ENCODE measurements at regions of chr12 and their contacts with region 1.

Region 1: DNA sequence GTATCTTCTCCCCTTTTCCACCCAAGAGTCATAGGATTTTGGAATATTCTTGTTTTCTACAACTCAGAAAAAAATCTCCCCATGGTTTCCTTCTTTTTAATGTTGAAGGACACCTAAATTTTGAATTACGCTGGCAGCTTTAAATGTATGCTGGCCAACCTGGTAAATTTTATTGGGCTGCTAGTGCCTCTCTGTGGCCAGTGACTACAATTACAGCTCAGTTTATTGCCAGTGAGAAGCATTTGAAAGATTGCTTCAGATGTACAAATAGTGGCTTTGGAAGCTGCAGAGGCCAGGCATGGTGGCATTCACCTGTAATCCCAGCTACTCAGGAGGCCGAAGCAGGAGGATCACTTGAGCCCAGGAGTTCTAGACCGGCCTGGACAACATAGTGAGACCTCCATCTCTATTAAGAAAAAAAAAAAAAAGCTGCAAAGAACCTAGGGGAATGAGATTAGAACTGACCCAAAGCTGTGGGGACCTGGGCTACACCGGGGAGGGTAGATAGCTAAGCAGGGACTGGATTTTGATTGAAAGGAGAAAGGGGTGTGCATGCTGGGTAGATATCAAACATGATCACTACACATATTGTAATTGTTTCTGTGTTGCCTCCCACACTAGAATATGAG is 7.6 kb upstream of the RAB21 start:
- DNase-seq: peak; percentile 45
- ATAC-seq: peak; percentile 95
- H3K4me3 ChIP-seq: no peak overlapping the region
- H3K27ac ChIP-seq: no peak overlapping the region
- H3K4me1 ChIP-seq: no peaks in the 10 kb centered on the region
- H3K27me3 ChIP-seq: no peaks in the 10 kb centered on the region; a peak in 1 of 4 replicates
- CTCF ChIP-seq: peak; percentile 67 to 85 (median 80)
- EP300 ChIP-seq: no peak
- POLR2A ChIP-seq: no peak
- RAD21 ChIP-seq: peak; percentile 97

Region 2: GRCh38 chr12:70733385-70733784 is 1013.7 kb before region 1 on chr12:
- CTCF ChIA-PET with region 1: interaction called, 7 read pairs
- POLR2A ChIA-PET with region 1: no interaction called
- RAD21 ChIA-PET with region 1: interaction called, 4 read pairs
- SMC1A ChIA-PET with region 1: interaction called, 5 read pairs
- in situ Hi-C with region 1: loop called (anchors 25 kb)
- intact Hi-C with region 1: loop called (anchors 10 kb)
- DNase-seq: peak; percentile 5
- ATAC-seq: peak; percentile 91
- H3K4me3 ChIP-seq: no peak overlapping the region
- H3K27ac ChIP-seq: no peak overlapping the region
- H3K4me1 ChIP-seq: no peaks in the 10 kb centered on the region
- H3K27me3 ChIP-seq: no peaks in the 10 kb centered on the region
- CTCF ChIP-seq: peak; percentile 58 to 67 (median 63)
- EP300 ChIP-seq: no peak
- POLR2A ChIP-seq: no peak
- RAD21 ChIP-seq: peak; percentile 77

Region 3: DNA sequence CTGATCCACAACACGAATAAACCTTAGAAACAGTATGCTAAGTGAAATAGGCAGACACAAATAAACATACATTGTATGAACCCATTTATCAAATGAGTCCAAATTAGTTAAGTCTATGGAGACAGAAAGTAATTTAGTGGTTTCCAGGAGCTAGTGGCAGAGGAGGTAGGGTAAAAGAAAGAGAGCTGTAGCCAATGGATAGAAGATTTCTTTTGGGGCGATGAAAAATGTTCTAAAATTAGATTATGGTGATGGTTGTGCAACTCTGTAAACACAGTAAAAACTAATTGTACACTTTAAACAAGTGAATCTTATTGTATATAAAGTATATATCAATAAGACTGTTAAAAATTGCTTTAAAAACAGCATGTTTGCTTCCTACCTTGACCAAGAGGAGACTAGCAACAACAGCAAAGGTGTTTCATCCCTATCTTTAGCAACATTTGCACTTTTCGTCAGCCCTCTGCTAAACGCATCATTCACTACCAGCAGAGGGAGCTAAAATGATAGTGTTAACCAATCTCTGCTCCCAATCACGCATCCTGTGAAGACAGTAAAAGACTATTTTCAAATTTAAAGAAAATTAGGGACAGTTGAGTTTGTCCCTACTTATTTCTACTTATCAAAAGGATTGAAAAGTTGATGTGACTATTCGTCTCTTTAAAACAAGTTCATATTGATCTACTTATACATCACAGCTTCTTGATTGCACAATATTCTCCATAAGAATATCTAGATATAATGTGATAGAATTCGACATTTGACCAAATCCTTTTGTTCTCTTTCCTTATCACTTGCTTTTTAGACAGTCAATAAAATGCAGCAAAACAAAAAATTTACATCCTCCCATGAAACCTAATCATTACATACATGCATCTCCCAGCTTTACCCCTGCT is 331.5 kb before region 1 on chr12:
- CTCF ChIA-PET with region 1: interaction called, 107 read pairs
- POLR2A ChIA-PET with region 1: no interaction called
- RAD21 ChIA-PET with region 1: interaction called, 26 read pairs
- SMC1A ChIA-PET with region 1: interaction called, 48 read pairs
- in situ Hi-C with region 1: loop called (anchors 5 kb)
- intact Hi-C with region 1: loop called (anchors 1 kb)
- DNase-seq: peak; percentile 7
- ATAC-seq: peak; percentile 92
- H3K4me3 ChIP-seq: no peak overlapping the region
- H3K27ac ChIP-seq: no peak overlapping the region
- H3K4me1 ChIP-seq: no peaks in the 10 kb centered on the region
- H3K27me3 ChIP-seq: no peaks in the 10 kb centered on the region
- CTCF ChIP-seq: peak; percentile 67 to 75 (median 70)
- EP300 ChIP-seq: no peak
- POLR2A ChIP-seq: no peak
- RAD21 ChIP-seq: peak; percentile 76

Region 4: DNA sequence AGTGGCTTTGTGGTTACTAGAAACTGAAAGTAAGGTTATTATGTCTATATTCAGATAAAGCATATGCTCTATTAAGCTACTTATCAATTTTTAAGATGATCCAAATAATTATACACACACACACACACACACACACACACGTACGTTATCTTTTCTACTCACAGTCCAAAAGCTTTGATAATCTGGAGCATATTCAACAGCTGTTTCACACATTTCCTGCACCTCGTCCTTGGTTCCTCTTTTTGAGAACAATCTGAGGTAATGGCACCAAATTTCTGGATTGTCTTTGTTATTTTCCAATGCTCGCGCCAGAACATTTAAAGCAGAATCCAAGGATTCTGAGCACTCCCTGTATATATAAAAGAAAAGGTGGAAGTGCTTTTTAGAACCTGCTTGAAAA is 121.0 kb before region 1 on chr12:
- CTCF ChIA-PET with region 1: interaction called, 32 read pairs
- POLR2A ChIA-PET with region 1: no interaction called
- RAD21 ChIA-PET with region 1: interaction called, 26 read pairs
- SMC1A ChIA-PET with region 1: interaction called, 95 read pairs
- in situ Hi-C with region 1: no loop called
- intact Hi-C with region 1: no loop called
- DNase-seq: no peak
- ATAC-seq: peak; percentile 84
- H3K4me3 ChIP-seq: no peak overlapping the region
- H3K27ac ChIP-seq: no peak overlapping the region
- H3K4me1 ChIP-seq: no peaks in the 10 kb centered on the region
- H3K27me3 ChIP-seq: no peaks in the 10 kb centered on the region
- CTCF ChIP-seq: no peak
- EP300 ChIP-seq: no peak
- POLR2A ChIP-seq: no peak
- RAD21 ChIP-seq: no peak

Region 5: GRCh38 chr12:71663561-71664294 is 83.4 kb before region 1 on chr12 and contains the start of gene ZFC3H1:
- CTCF ChIA-PET with region 1: interaction called, 31 read pairs
- POLR2A ChIA-PET with region 1: interaction called, 3 read pairs
- RAD21 ChIA-PET with region 1: interaction called, 29 read pairs
- SMC1A ChIA-PET with region 1: interaction called, 16 read pairs
- in situ Hi-C with region 1: no loop called
- intact Hi-C with region 1: no loop called
- DNase-seq: peak; percentile 99
- ATAC-seq: peak; percentile 89
- H3K4me3 ChIP-seq: peak within 1 kb of the TSS; percentile 99
- H3K27ac ChIP-seq: peak within 1 kb of the TSS; percentile 85
- H3K4me1 ChIP-seq: 0 out of 2 replicates have a peak, but pooled peaks cover 6% of the 10 kb centered on the region
- H3K27me3 ChIP-seq: no peaks in the 10 kb centered on the region
- CTCF ChIP-seq: peak; percentile 26 to 43 (median 30); a peak in 4 of 6 replicates
- EP300 ChIP-seq: no peak
- POLR2A ChIP-seq: peak; percentile 85
- RAD21 ChIP-seq: no peak
- polyA plus RNA-seq, gene ZFC3H1: 11.2 to 14.6 TPM

Region 6: DNA sequence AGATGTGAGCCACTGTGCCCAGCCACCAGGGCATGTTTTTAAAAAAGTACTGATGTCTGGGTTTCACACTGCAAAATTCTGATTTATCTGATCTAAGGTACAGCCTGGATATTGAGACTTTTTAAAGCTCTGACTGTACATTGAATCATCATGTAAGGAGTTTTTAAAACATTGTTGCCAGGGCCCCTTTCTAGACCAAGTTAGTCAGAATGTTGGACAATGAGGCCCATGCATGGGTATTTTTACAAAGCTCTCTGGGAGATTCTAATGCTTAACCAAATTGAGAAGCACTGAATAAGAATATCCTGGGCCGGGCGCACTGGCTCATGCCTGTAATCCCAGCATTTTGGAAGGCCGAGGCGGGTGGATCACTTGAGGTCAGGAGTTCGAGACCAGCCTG is 44.5 kb before region 1 on chr12:
- CTCF ChIA-PET with region 1: interaction called, 11 read pairs
- POLR2A ChIA-PET with region 1: no interaction called
- RAD21 ChIA-PET with region 1: interaction called, 7 read pairs
- SMC1A ChIA-PET with region 1: interaction called, 7 read pairs
- in situ Hi-C with region 1: no loop called
- intact Hi-C with region 1: no loop called
- DNase-seq: no peak
- ATAC-seq: no peak
- H3K4me3 ChIP-seq: no peak overlapping the region
- H3K27ac ChIP-seq: no peak overlapping the region
- H3K4me1 ChIP-seq: no peaks in the 10 kb centered on the region
- H3K27me3 ChIP-seq: no peaks in the 10 kb centered on the region
- CTCF ChIP-seq: no peak
- EP300 ChIP-seq: no peak
- POLR2A ChIP-seq: no peak
- RAD21 ChIP-seq: no peak

Region 7: GRCh38 chr12:71780237-71780822 is 33.2 kb after region 1 on chr12:
- CTCF ChIA-PET with region 1: interaction called, 15 read pairs
- POLR2A ChIA-PET with region 1: no interaction called
- RAD21 ChIA-PET with region 1: interaction called, 3 read pairs
- SMC1A ChIA-PET with region 1: interaction called, 3 read pairs
- in situ Hi-C with region 1: no loop called
- intact Hi-C with region 1: no loop called
- DNase-seq: no peak
- ATAC-seq: peak; percentile 82
- H3K4me3 ChIP-seq: no peak overlapping the region
- H3K27ac ChIP-seq: no peak overlapping the region
- H3K4me1 ChIP-seq: no peaks in the 10 kb centered on the region
- H3K27me3 ChIP-seq: no peaks in the 10 kb centered on the region
- CTCF ChIP-seq: peak; percentile 55 to 69 (median 58)
- EP300 ChIP-seq: no peak
- POLR2A ChIP-seq: no peak
- RAD21 ChIP-seq: peak; percentile 76

Measured in GM12878 (cell line).